Activated CD8-positive, alpha-beta T cell treated with anti-CD3 and anti-CD28 coated beads for 36 hours (primary cell): ENCODE measurements at regions of chr17 and their contacts with region 1.

Region 1: DNA sequence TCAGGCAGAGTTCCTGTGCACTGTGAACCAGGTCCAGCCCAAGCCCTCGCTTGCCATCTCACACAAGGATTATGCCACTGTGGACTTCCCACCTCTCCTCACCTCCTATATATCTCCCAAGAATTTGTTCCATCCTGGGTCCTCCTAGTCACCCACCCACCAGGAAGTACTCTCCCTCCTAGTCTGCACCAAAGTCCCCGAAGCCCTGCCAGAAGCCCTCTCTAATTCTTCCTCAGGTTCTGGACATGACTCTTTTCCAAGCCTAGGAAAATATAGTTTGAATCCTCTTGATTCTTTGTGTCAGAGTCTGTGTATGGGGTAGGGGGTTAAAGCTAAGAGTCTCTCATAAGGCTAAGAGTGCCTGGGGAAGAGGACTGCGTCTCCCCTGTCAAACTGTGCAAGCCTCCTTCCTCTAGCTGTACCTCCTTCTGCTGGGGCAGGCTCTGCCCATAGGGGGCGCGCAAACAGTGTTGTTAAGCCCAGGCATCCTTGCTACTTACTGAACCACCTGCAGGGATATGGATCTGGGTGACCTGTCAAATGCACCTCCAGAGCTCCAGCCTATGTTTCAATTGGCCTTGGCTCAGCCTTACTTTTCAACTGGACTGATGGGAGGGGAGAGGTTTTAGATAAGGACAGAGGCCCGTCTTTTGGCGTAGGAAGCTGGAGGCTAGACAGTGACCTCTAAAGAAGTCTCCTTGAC is 16.6 kb upstream of the DLX4 start:
- DNase-seq: peak; percentile 95
- ATAC-seq: peak; percentile 98
- H3K4me3 Mint-ChIP-seq: no peak overlapping the region
- H3K27ac Mint-ChIP-seq: no peak overlapping the region
- H3K4me1 Mint-ChIP-seq: no peaks in the 10 kb centered on the region
- H3K27me3 Mint-ChIP-seq: peaks cover 36% of the 10 kb centered on the region
- CTCF ChIP-seq: peak; percentile 87

Region 2: DNA sequence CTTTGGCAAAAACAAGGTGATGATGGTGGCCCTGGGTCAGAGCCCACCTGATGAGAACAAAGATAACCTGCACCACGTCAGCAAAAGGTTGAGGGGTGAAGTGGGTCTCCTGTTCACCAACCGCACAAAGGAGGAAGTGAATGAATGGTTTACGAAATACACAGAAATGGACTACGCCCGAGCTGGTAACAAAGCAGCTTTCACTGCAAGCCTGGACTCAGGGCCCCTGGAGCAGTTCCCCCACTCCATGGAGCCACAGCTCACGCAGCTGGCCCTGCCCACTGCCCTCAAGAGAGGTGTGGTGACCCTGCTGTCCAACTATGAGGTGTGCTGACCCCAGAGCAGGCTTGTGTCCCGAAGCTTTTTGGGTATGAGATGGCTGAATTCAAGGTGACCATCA is 13.0 kb before region 1 on chr17:
- CTCF ChIA-PET with region 1: interaction called, 31 read pairs
- POLR2A ChIA-PET with region 1: interaction called, 3 read pairs
- intact Hi-C with region 1: no loop called
- DNase-seq: no peak
- ATAC-seq: no peak
- H3K4me3 Mint-ChIP-seq: no peak overlapping the region
- H3K27ac Mint-ChIP-seq: no peak overlapping the region
- H3K4me1 Mint-ChIP-seq: no peaks in the 10 kb centered on the region
- H3K27me3 Mint-ChIP-seq: peaks cover 17% of the 10 kb centered on the region
- CTCF ChIP-seq: no peak

Region 3: DNA sequence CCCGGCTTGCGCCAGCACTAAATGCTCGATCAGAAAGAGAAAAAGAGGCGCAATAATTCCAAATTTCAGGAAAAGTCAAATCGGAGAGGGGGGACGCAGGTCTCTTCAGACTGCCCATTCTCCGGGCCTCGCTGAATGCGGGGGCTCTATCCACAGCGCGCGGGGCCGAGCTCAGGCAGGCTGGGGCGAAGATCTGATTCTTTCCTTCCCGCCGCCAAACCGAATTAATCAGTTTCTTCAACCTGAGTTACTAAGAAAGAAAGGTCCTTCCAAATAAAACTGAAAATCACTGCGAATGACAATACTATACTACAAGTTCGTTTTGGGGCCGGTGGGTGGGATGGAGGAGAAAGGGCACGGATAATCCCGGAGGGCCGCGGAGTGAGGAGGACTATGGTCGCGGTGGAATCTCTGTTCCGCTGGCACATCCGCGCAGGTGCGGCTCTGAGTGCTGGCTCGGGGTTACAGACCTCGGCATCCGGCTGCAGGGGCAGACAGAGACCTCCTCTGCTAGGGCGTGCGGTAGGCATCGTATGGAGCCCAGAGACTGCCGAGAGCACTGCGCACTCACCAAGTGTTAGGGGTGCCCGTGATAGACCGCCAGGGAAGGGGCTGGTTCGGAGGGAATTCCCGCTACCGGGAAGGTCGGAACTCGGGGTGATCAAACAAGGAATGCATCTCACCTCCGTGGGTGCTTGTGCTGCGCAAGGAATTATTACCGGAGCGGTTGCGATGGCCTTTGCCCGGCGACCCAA is 12.6 kb after region 1 on chr17:
- CTCF ChIA-PET with region 1: interaction called, 30 read pairs
- POLR2A ChIA-PET with region 1: interaction called, 4 read pairs
- intact Hi-C with region 1: no loop called
- DNase-seq: peak; percentile 66
- ATAC-seq: peak; percentile 42
- H3K4me3 Mint-ChIP-seq: peak overlapping the region; percentile 56
- H3K27ac Mint-ChIP-seq: no peak overlapping the region
- H3K4me1 Mint-ChIP-seq: peaks cover 37% of the 10 kb centered on the region
- H3K27me3 Mint-ChIP-seq: peaks cover 62% of the 10 kb centered on the region
- CTCF ChIP-seq: no peak

Region 4: DNA sequence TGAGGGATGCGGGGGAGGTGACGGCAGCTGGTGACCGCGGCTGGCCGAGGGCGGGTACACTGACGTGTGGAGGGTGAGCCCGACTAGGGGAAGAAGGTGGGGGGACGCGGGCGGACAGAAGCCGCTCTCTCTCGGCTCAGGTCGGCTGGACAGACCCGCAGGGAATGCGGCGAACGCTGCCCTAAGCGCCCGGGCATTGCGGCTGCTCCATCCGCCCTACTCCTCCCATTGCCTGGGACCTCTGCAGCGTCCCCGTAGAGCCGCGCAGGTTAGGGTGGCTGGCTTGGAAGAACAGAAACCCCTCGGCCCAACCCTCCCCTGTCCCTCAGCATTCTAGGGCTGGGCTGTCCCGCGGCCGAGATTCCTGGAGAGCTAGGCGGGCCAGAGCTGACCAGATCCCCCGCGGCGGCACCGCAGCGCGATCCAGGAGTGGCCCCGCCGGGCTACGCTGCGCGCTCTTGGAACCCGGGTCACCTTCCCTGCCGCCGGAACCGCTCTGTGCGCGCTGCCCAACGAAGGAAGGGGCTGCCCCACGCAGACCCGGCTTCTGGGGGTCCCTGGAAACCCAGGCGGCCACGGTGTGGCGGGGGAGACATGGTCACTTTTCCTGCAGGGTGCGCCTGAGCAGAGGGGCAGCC is 19.6 kb after region 1 on chr17:
- CTCF ChIA-PET with region 1: interaction called, 18 read pairs
- POLR2A ChIA-PET with region 1: interaction called, 4 read pairs
- intact Hi-C with region 1: no loop called
- DNase-seq: peak; percentile 44
- ATAC-seq: no peak
- H3K4me3 Mint-ChIP-seq: no peak overlapping the region
- H3K27ac Mint-ChIP-seq: no peak overlapping the region
- H3K4me1 Mint-ChIP-seq: peaks cover 32% of the 10 kb centered on the region
- H3K27me3 Mint-ChIP-seq: peaks cover 61% of the 10 kb centered on the region
- CTCF ChIP-seq: no peak

Region 5: GRCh38 chr17:50003911-50004310 is 51.6 kb after region 1 on chr17:
- CTCF ChIA-PET with region 1: interaction called, 169 read pairs
- POLR2A ChIA-PET with region 1: no interaction called
- intact Hi-C with region 1: no loop called
- DNase-seq: no peak
- ATAC-seq: no peak
- H3K4me3 Mint-ChIP-seq: no peak overlapping the region
- H3K27ac Mint-ChIP-seq: no peak overlapping the region
- H3K4me1 Mint-ChIP-seq: no peaks in the 10 kb centered on the region
- H3K27me3 Mint-ChIP-seq: peaks cover 37% of the 10 kb centered on the region
- CTCF ChIP-seq: no peak

Region 6: GRCh38 chr17:50240851-50241250 is 288.5 kb after region 1 on chr17:
- CTCF ChIA-PET with region 1: no interaction called
- POLR2A ChIA-PET with region 1: no interaction called
- intact Hi-C with region 1: no loop called
- DNase-seq: no peak
- ATAC-seq: no peak
- H3K4me3 Mint-ChIP-seq: no peak overlapping the region
- H3K27ac Mint-ChIP-seq: no peak overlapping the region
- H3K4me1 Mint-ChIP-seq: no peaks in the 10 kb centered on the region
- H3K27me3 Mint-ChIP-seq: peaks cover 36% of the 10 kb centered on the region
- CTCF ChIP-seq: no peak